PC-3 (cell line): ENCODE measurements at regions of chr2 and their contacts with region 1.

Region 1: DNA sequence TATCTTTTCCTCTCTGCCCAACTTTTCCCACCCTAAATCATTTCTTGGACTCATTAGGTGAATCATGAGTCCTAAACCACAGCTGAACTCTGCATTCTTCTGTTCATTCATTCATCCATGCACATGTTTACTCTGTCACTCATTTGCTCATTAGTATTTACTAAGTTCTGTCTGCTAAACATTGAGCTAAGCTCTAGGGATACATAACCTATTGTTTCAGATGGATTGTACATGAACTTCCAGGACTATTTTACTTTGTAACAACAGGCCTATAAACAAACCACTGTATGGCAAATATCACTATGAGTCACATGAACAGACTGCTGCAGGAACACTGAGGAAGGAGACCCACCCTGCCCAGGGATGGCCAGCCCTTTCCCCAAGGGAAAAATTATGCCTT is 14.6 kb upstream of the DYNC2LI1 start:
- DNase-seq: peak; percentile 91
- ATAC-seq: peak; percentile 96
- H3K4me3 ChIP-seq: no peak overlapping the region
- H3K27ac ChIP-seq: peak overlapping the region; percentile 96
- H3K4me1 ChIP-seq: peaks cover 42% of the 10 kb centered on the region
- H3K27me3 ChIP-seq: no peaks in the 10 kb centered on the region
- CTCF ChIP-seq: no peak

Region 2: DNA sequence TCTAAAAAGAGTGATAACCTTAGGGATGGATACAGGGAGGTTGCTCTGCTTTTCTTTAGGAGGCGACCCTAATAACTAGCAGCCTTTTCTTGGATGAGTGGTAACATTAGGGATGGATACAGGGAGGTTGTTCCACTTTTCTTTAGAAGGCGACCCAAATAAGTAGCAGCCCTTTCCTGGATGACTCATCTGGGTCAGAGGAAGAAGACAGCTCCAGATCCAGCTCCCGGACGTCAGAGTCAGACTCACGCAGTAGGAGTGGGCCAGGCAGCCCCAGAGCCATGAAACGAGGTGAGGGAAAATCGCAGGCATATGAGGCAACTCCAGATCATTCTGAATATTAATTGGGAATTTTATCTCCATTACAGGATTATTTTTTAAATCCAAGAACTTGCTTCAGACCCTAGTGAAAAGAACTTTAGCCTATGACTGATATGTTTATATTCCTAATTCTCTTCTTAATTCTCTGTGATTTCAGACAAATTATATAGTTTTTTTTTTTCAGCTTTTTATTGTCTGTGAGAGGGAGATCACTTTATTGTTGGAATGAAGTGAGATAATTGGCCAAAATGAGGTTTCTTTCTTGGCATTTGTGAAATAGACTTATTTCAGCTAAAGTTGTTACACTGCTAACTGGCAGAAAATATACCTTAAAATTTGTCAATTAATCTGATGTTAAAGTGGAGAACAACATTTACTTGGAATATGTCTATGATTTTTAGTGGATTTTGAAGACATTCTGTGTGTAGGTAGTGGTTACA is 51.8 kb before region 1 on chr2:
- CTCF ChIA-PET with region 1: no interaction called
- POLR2A ChIA-PET with region 1: no interaction called
- intact Hi-C with region 1: loop called (anchors 2 kb)
- DNase-seq: peak; percentile 86
- ATAC-seq: peak; percentile 94
- H3K4me3 ChIP-seq: no peak overlapping the region
- H3K27ac ChIP-seq: peak overlapping the region; percentile 87
- H3K4me1 ChIP-seq: peaks cover 37% of the 10 kb centered on the region
- H3K27me3 ChIP-seq: no peaks in the 10 kb centered on the region
- CTCF ChIP-seq: no peak

Region 3: DNA sequence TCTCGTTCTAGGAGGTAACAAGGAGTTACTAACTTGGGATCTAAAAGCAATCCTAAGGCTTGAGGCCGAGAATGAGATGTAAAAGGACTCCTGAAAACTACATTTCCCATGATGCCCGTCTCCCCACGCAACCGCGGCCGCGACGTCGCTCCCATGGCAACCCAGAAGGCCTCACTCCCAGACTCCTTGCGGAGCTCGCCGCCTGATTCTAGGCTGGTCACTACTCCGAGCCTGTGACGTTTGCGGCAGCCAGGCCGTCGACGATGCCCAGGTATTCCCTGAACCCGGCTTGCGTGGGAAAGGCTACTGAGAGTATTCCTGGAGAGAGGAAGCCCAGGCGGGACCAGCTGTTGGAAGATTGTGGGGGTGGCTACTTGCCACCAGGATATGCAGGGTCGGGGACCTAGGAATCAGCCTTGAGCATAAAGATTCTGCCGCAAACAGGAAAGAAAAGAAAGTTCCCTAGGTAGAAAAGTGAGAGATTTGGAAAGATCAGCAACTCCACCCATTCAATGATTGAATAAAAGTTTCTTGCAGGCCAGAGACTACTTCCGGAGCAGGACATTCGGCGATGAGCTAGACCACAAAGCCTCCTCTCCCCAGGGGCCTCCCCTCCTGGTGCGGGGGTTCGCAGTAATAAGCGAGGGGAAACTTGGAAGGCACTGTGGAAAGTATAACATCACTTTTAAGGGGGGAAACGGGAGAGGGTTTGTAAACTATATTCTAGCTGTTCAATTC is 14.8 kb after region 1 on chr2 and contains the start of gene DYNC2LI1:
- CTCF ChIA-PET with region 1: no interaction called
- POLR2A ChIA-PET with region 1: interaction called, 3 read pairs
- intact Hi-C with region 1: loop called (anchors 1 kb)
- DNase-seq: peak; percentile 91
- ATAC-seq: peak; percentile 100
- H3K4me3 ChIP-seq: peak within 1 kb of the TSS; percentile 84
- H3K27ac ChIP-seq: peak within 1 kb of the TSS; percentile 76
- H3K4me1 ChIP-seq: no peaks in the 10 kb centered on the region
- H3K27me3 ChIP-seq: no peaks in the 10 kb centered on the region
- CTCF ChIP-seq: no peak
- total RNA-seq, gene DYNC2LI1: 10.8 and 17.7 TPM in 2 replicates

Region 4: GRCh38 chr2:43958397-43959275 is 199.4 kb after region 1 on chr2:
- CTCF ChIA-PET with region 1: no interaction called
- POLR2A ChIA-PET with region 1: no interaction called
- intact Hi-C with region 1: no loop called
- DNase-seq: no peak
- ATAC-seq: no peak
- H3K4me3 ChIP-seq: no peak overlapping the region
- H3K27ac ChIP-seq: no peak overlapping the region
- H3K4me1 ChIP-seq: no peaks in the 10 kb centered on the region
- H3K27me3 ChIP-seq: no peaks in the 10 kb centered on the region
- CTCF ChIP-seq: no peak